Stomach (tissue), 19 donors: ENCODE measurements at regions of chr11 and their contacts with region 1.

Region 1: GRCh38 chr11:65170058-65170534 is at the start of gene SPDYC:
- DNase-seq: no peak
- H3K4me3 ChIP-seq: no peak within 1 kb of the TSS
- H3K27ac ChIP-seq: no peak within 1 kb of the TSS
- H3K4me1 ChIP-seq: peaks cover 0 to 7% (median 3%) of the 10 kb centered on the region in 4 donors
- H3K27me3 ChIP-seq: no peaks in the 10 kb centered on the region
- CTCF ChIP-seq: no peak
- EP300 ChIP-seq: no peak
- POLR2A ChIP-seq: no peak
- total RNA-seq, gene SPDYC: not detected

Region 2: DNA sequence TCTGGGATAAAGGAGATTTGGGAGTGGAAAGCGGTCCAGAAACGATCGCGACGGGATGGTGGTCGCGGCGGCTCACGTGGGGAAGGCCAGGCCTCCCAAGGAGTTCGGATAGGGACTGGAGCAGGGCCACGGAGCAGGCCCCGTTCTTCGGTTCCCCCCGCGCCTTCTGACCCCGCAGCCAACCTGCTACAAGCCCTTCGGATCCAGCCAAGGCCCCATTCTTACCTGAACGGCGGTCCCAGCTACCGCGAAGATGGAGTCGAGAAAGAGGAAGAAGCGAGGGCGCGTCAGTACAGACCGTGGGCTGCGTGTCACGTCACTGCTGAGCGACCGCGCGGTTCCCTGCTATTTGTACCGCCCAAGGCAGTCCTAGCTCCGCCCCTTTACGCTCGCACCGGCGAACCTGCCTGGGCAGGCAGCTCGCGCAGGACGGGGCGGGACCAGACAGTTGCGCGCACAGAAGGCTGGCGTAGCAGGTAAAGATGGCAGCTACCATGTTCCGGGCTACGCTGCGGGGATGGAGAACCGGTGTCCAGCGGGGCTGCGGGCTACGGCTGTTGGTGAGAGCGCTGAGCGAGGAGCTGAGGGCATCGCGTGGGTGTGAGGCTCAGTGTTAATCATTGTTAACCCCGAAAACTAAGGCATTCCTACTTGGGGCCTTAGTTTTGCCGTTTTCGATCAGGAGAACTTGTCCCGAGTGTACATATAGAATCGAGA is 48.1 kb before region 1 on chr11 and contains the starts of genes FAU and MRPL49:
- intact Hi-C with region 1: loop called (anchors 10 kb)
- DNase-seq: peak; percentile 99 to 100
- H3K4me3 ChIP-seq: peak within 1 kb of the TSS; percentile 67 to 93 (median 74)
- H3K27ac ChIP-seq: peak within 1 kb of the TSS; percentile 93 to 96 (median 95)
- H3K4me1 ChIP-seq: peaks cover 14 to 72% (median 44%) of the 10 kb centered on the region in 4 donors
- H3K27me3 ChIP-seq: no peaks in the 10 kb centered on the region
- CTCF ChIP-seq: peak in 1 of 7 experiments; percentile 25
- EP300 ChIP-seq: no peak
- POLR2A ChIP-seq: peak in 2 of 4 donors; percentile 79 to 94
- total RNA-seq, gene FAU: 456 to 1,872 (median 566) TPM
- total RNA-seq, gene MRPL49: 22.8 to 75.9 (median 33.0) TPM